ENCODE measurements at regions of chr17 and their contacts with region 1.

Region 1: DNA sequence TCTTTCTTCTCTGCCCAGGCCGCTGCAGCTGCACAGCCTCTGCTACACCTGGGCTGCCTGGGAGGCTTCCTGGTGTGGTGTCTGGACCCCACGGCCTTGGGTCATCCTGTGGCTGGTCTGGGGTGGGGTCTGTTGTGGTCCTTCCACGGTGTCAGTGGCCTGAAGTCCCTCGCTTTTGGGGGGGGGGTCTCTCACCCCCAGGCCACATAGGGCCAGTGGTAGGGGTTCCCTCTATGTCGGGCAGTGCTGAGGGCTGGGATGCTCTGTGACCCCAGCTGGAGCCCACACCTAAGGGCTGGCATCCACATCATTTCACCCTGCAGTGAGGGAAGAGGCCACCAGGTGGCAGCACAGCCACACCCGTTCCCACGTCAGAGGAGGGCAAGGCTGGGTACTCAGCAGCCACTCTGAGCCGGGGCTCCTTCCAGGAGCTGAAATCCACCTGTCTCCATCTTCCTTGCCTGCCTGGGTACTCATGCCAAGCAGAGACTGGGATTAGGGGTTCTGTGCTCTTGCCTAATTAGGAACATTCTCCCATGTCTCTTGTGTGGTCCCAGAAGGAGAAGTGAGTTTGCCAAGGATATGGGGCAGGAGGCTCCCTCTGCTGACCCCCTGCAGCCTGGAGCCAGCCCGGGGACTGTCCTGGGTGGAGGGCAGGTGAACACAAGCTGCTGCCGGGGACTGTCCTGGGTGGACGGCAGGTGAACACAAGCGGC is 13.0 kb downstream of the ENGASE start:
- DNase-seq: peak; percentile 43 to 85 (median 78)
- H3K4me3 ChIP-seq: no peak overlapping the region
- H3K27ac ChIP-seq: no peak overlapping the region
- H3K4me1 ChIP-seq: peaks cover 8% of the 10 kb centered on the region
- H3K27me3 ChIP-seq: no peaks in the 10 kb centered on the region
- CTCF ChIP-seq: peak; percentile 72 to 80 (median 77)
- EP300 ChIP-seq: no peak
- POLR2A ChIP-seq: no peak

Region 2: GRCh38 chr17:79045842-79046196 is 41.8 kb before region 1 on chr17:
- intact Hi-C with region 1: loop called in 1 of 4 experiments (anchors 5 kb)
- DNase-seq: peak; percentile 45 to 82 (median 68)
- H3K4me3 ChIP-seq: no peak overlapping the region
- H3K27ac ChIP-seq: no peak overlapping the region
- H3K4me1 ChIP-seq: peaks cover 2% of the 10 kb centered on the region
- H3K27me3 ChIP-seq: no peaks in the 10 kb centered on the region
- CTCF ChIP-seq: peak; percentile 72 to 82 (median 80)
- EP300 ChIP-seq: no peak
- POLR2A ChIP-seq: no peak

Region 3: GRCh38 chr17:79147746-79148506 is 60.3 kb after region 1 on chr17:
- intact Hi-C with region 1: no loop called
- DNase-seq: no peak
- H3K4me3 ChIP-seq: no peak overlapping the region
- H3K27ac ChIP-seq: no peak overlapping the region
- H3K4me1 ChIP-seq: no peaks in the 10 kb centered on the region
- H3K27me3 ChIP-seq: no peaks in the 10 kb centered on the region
- CTCF ChIP-seq: no peak
- EP300 ChIP-seq: no peak
- POLR2A ChIP-seq: no peak

Region 4: GRCh38 chr17:79707931-79708891 is 620.6 kb after region 1 on chr17:
- intact Hi-C with region 1: loop called in 1 of 4 experiments (anchors 5 kb)
- DNase-seq: peak; percentile 33 to 77 (median 67)
- H3K4me3 ChIP-seq: peak overlapping the region; percentile 14
- H3K27ac ChIP-seq: no peak overlapping the region
- H3K4me1 ChIP-seq: peaks cover 6% of the 10 kb centered on the region
- H3K27me3 ChIP-seq: no peaks in the 10 kb centered on the region
- CTCF ChIP-seq: peak; percentile 55 to 78 (median 67)
- EP300 ChIP-seq: no peak
- POLR2A ChIP-seq: no peak

Measured in ovary (tissue), 10 donors.